ENCODE measurements at regions of chr5 and their contacts with region 1.

Region 1: GRCh38 chr5:55172051-55172899 is 702 bp downstream of the CDC20B start:
- DNase-seq: peak; percentile 70 to 86
- H3K4me3 ChIP-seq: peak overlapping the region; percentile 37
- H3K4me1 ChIP-seq: peaks cover 34% of the 10 kb centered on the region
- H3K27me3 ChIP-seq: no peaks in the 10 kb centered on the region

Region 2: GRCh38 chr5:54547711-54548250 is 624.5 kb before region 1 on chr5:
- in situ Hi-C with region 1: loop called (anchors 25 kb)
- DNase-seq: no peak
- H3K4me3 ChIP-seq: no peak overlapping the region
- H3K4me1 ChIP-seq: no peaks in the 10 kb centered on the region
- H3K27me3 ChIP-seq: no peaks in the 10 kb centered on the region

Region 3: GRCh38 chr5:55226027-55226933 is 54.0 kb after region 1 on chr5:
- in situ Hi-C with region 1: loop called (anchors 10 kb)
- DNase-seq: peak; percentile 83 to 95
- H3K4me3 ChIP-seq: peak overlapping the region; percentile 61
- H3K4me1 ChIP-seq: peaks cover 16% of the 10 kb centered on the region
- H3K27me3 ChIP-seq: no peaks in the 10 kb centered on the region

Region 4: GRCh38 chr5:55711968-55712859 is 539.9 kb after region 1 on chr5 and contains the start of gene SLC38A9:
- in situ Hi-C with region 1: loop called (anchors 25 kb)
- DNase-seq: peak; percentile 91 to 97
- H3K4me3 ChIP-seq: peak within 1 kb of the TSS; percentile 84
- H3K4me1 ChIP-seq: peaks cover 13% of the 10 kb centered on the region
- H3K27me3 ChIP-seq: no peaks in the 10 kb centered on the region

Measured in HAP-1 (cell line).